RWPE1 (cell line): ENCODE measurements at regions of chr14 and their contacts with region 1.

Region 1: DNA sequence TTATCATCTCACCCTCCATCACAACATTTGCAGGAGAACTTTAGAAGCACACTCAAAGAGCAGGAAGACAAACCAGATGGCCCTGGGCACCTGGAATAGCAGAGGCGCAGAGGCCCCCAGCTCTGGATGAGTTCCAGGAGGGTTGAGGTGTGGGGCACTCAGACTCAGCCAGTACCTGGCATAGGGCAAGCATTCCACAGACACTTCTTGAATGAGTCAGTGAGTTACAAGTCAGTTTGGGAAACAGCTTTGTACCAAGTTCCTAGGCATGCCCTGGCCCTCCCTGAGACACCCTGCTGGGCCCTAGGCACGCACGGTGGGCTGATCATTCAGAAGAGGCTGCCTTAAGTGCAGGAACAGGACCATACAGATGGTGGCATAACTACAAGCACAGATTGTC is 54.3 kb downstream of the MAP3K9 start:
- DNase-seq: peak; percentile 84
- H3K27ac ChIP-seq: peak overlapping the region; percentile 82
- CTCF ChIP-seq: no peak

Region 2: DNA sequence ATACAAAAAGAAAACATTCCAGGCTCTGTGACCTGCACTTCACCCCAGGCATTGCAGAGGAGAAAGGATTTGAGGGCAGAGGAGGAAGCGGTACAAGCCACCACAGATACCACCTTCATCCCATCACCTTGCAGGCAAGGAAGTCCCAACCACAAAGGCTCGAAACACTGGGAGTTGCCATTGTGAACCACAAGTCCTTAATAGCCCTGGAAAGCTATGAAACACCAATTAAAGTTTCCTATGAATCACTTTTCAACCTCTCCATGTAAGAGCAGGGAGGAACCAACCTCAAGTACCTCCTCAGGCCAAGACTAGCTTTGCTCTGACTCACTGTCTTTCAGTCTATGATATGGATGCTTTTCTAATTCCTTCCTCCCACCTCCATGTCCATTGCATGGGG is 27.4 kb after region 1 on chr14:
- CTCF ChIA-PET with region 1: no interaction called
- POLR2A ChIA-PET with region 1: interaction called, 10 read pairs
- DNase-seq: peak; percentile 90
- H3K27ac ChIP-seq: peak overlapping the region; percentile 88
- CTCF ChIP-seq: no peak

Region 3: DNA sequence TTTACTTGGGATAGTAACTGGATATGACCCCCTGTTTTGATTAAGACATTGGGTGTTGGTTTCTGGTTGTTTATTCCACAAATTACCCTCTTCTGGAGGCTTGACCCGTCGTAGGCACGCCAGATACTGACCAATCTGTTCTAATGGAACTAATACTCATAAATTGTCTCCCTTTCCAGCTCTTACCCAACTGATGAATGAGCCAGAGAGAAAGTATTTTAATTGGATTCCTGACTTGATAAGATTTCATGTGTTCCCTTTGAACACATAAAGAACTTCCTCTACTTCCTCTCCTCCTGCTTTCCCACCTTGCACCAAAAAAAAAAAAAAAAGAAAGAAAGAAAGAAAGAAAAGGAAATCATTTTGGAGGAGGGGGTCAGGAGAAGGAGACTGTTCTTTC is 493.2 kb after region 1 on chr14:
- CTCF ChIA-PET with region 1: no interaction called
- POLR2A ChIA-PET with region 1: no interaction called
- DNase-seq: no peak
- H3K27ac ChIP-seq: no peak overlapping the region
- CTCF ChIP-seq: no peak